H1 (cell line): ENCODE measurements at regions of chr16 and their contacts with region 1.

Region 1: GRCh38 chr16:3400779-3401688 is at the starts of genes ZNF174 and ZSCAN32:
- DNase-seq: peak; percentile 99
- H3K4me3 ChIP-seq: peak within 1 kb of the TSS; percentile 86 to 89 (median 87)
- H3K27ac ChIP-seq: no peak within 1 kb of the TSS
- H3K4me1 ChIP-seq: peaks cover 0 to 2% (median 0%) of the 10 kb centered on the region in 4 experiments; a peak in 2 of 7 replicates
- H3K27me3 ChIP-seq: no peaks in the 10 kb centered on the region
- CTCF ChIP-seq: no peak
- EP300 ChIP-seq: no peak
- POLR2A ChIP-seq: peak in 1 of 2 experiments; percentile 73; a peak in 2 of 3 replicates
- RAD21 ChIP-seq: no peak; a peak in 1 of 4 replicates
- total RNA-seq, gene ZNF174: 12.2 and 12.7 TPM in 2 replicates
- total RNA-seq, gene ZSCAN32: 22.0 and 22.6 TPM in 2 replicates

Region 2: GRCh38 chr16:3443108-3444031 is 42.3 kb after region 1 on chr16 and contains the starts of genes NAA60 and ZNF597:
- CTCF ChIA-PET with region 1: no interaction called
- POLR2A ChIA-PET with region 1: interaction called, 14 read pairs
- DNase-seq: peak; percentile 50 to 64
- H3K4me3 ChIP-seq: peak within 1 kb of the TSS; percentile 67 to 85 (median 78)
- H3K27ac ChIP-seq: peak within 1 kb of the TSS; percentile 37; the same call in 1 of the 2 replicates
- H3K4me1 ChIP-seq: no peaks in the 10 kb centered on the region; a peak in 1 of 7 replicates
- H3K27me3 ChIP-seq: no peaks in the 10 kb centered on the region
- CTCF ChIP-seq: no peak
- EP300 ChIP-seq: no peak
- POLR2A ChIP-seq: no peak
- RAD21 ChIP-seq: 0 out of 4 replicates have a peak, but pooled peaks of 1 of the 2 experiments have one; percentile 2
- total RNA-seq, gene NAA60: 47.6 and 48.3 TPM in 2 replicates
- total RNA-seq, gene ZNF597: 2.3 and 2.6 TPM in 2 replicates